ENCODE measurements at regions of chr2 and their contacts with region 1.

Region 1: DNA sequence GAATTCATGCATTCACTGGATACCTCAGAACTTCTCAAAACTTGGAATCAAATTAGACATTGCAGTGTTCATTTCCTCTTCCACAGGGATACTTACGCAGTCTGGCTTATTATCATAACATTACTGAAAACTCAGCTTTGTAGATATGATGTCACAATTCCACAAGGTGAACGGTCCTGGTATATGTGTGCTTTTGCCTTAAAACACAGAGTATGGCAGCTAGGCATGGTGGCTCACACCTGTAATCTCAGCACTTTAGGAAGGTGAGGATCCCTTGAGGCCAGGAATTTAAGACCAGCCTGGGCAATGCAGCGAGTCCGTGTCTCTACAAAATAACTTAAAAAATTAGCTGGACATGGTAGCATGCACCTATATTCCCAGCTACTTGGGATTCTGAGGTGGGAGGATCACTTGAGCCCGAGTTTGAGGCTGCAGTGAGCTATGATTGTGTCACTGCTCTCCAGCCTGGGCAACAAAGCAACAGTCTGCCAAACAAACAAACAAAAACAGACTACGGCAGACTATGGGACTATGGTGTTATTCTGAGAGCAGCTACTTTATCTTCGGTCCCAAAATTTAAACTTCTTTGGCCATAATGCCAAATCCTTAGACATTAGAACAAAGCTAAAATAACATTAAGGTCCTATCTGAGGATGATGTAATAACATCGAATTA is 1191.9 kb upstream of the SLC39A10 start:
- DNase-seq: peak in 2 of 9 donors; percentile 11 to 25
- ATAC-seq: no peak
- H3K4me3 ChIP-seq: no peak overlapping the region
- H3K4me3 Mint-ChIP-seq: no peak overlapping the region
- H3K27ac ChIP-seq: no peak overlapping the region
- H3K27ac Mint-ChIP-seq: no peak overlapping the region
- H3K4me1 ChIP-seq: no peaks in the 10 kb centered on the region
- H3K4me1 Mint-ChIP-seq: no peaks in the 10 kb centered on the region
- H3K27me3 ChIP-seq: no peaks in the 10 kb centered on the region
- H3K27me3 Mint-ChIP-seq: no peaks in the 10 kb centered on the region

Region 2: GRCh38 chr2:194494401-194494800 is 29.3 kb after region 1 on chr2:
- CTCF ChIA-PET with region 1: no interaction called
- POLR2A ChIA-PET with region 1: no interaction called
- intact Hi-C with region 1: loop called in 1 of 2 experiments (anchors 2 kb)
- DNase-seq: no peak
- ATAC-seq: no peak
- H3K4me3 ChIP-seq: no peak overlapping the region
- H3K4me3 Mint-ChIP-seq: no peak overlapping the region
- H3K27ac ChIP-seq: no peak overlapping the region
- H3K27ac Mint-ChIP-seq: no peak overlapping the region
- H3K4me1 ChIP-seq: no peaks in the 10 kb centered on the region
- H3K4me1 Mint-ChIP-seq: no peaks in the 10 kb centered on the region
- H3K27me3 ChIP-seq: no peaks in the 10 kb centered on the region
- H3K27me3 Mint-ChIP-seq: no peaks in the 10 kb centered on the region